ENCODE measurements at regions of chr17 and their contacts with region 1.

Region 1: GRCh38 chr17:20234276-20234675 is 225.1 kb downstream of the SPECC1 start:
- DNase-seq: peak; percentile 69
- H3K4me3 Mint-ChIP-seq: peak overlapping the region; percentile 64
- H3K27ac Mint-ChIP-seq: peak overlapping the region; percentile 91
- H3K4me1 Mint-ChIP-seq: peaks cover 45% of the 10 kb centered on the region
- H3K27me3 Mint-ChIP-seq: no peaks in the 10 kb centered on the region

Region 2: DNA sequence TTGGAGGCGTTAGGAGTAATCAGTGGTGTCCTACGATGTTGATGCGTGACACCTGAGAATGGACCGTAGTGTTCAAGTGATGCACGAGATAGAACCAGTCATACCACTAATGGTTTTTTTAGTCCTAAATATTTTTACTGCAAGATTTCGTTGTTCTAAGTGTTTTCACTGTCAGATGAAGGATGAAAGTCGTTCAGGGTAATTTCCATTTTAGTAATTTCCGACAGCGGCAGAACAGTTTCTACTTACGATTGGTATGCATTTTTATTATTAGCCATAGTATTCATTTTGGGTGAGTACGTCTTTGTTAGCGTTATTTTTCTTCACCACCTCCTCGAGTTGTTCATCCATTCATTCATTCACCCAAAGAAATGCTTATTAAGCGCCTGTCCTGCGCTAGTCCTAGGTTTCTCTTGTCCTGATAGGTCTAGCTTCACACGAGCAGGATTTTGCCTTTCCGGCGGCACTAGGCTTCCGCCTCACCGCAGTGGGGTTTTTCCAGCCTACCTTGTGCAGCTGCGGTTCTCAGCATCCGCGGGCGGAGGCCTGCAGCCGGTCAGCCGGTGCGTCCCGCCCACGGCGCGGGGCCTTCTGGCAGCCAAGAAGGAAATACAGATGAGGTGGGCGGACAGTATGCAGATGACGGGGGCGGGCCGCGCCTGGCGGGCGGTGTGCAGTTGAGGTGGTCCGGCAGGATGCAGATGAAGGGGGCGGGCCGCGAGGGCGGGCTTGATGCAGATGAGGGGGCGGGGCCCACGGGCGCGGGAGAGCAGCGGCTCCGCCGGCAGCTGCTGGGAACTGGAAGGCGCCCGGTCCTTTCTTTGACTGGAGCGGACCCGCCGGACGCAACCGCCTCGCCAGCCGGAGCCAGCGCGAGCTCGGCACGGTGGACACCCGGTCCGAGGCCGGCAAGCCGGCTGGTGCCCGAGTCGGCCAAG is 78.7 kb before region 1 on chr17:
- intact Hi-C with region 1: loop called (anchors 5 kb)
- DNase-seq: peak; percentile 95
- H3K4me3 Mint-ChIP-seq: no peak overlapping the region
- H3K27ac Mint-ChIP-seq: no peak overlapping the region
- H3K4me1 Mint-ChIP-seq: peaks cover 3% of the 10 kb centered on the region
- H3K27me3 Mint-ChIP-seq: peaks cover 12% of the 10 kb centered on the region

Region 3: DNA sequence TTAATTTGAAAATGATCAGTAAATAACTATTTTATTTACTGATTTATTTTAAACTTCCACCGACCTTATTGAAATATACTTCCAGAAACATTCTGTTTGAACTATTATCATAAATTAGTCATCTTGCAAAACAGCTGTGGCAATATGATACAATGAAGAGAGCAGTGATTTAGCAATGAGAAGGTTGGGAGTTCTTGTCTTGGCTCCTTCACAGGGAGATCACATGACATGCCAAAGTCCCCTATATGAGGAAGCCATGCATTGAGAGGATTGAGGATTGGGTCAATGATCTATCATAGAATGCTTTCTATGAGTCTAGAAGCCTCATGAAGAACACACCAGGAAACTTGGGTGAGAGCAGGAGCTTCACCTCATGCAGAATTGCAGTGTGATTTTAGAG is 10.4 kb after region 1 on chr17:
- intact Hi-C with region 1: loop called (anchors 2 kb)
- DNase-seq: no peak
- H3K4me3 Mint-ChIP-seq: no peak overlapping the region
- H3K27ac Mint-ChIP-seq: no peak overlapping the region
- H3K4me1 Mint-ChIP-seq: peaks cover 19% of the 10 kb centered on the region
- H3K27me3 Mint-ChIP-seq: no peaks in the 10 kb centered on the region

Region 4: GRCh38 chr17:20281860-20282259 is 47.6 kb after region 1 on chr17:
- intact Hi-C with region 1: loop called (anchors 1 kb)
- DNase-seq: no peak
- H3K4me3 Mint-ChIP-seq: no peak overlapping the region
- H3K27ac Mint-ChIP-seq: peak overlapping the region; percentile 50
- H3K4me1 Mint-ChIP-seq: peaks cover 44% of the 10 kb centered on the region
- H3K27me3 Mint-ChIP-seq: no peaks in the 10 kb centered on the region